ENCODE measurements at regions of chr1 and their contacts with region 1.

Region 1: DNA sequence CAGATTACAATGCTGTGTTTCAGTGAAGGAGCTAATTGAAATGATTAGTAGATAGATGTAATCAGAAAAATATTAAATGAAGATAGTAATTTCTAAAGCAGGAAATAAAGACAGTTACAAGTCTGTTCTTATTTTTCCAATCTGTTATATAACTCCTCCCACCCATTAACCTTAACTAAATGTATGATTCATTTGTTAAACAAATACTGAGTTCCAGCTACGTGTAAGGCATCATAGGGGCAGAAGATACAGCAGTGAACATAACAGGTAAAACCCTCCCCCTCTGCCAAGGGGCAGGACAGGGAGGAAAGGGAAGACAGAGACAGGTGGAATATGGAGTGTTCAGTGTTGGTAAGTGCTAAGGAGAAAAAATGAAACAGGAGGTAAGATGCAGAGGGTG is at the start of gene FAM177B:
- DNase-seq: no peak
- ATAC-seq: no peak
- total RNA-seq, gene FAM177B: not detected

Region 2: GRCh38 chr1:222897527-222898190 is 160.7 kb after region 1 on chr1:
- intact Hi-C with region 1: no loop called
- DNase-seq: no peak
- ATAC-seq: no peak

Region 3: DNA sequence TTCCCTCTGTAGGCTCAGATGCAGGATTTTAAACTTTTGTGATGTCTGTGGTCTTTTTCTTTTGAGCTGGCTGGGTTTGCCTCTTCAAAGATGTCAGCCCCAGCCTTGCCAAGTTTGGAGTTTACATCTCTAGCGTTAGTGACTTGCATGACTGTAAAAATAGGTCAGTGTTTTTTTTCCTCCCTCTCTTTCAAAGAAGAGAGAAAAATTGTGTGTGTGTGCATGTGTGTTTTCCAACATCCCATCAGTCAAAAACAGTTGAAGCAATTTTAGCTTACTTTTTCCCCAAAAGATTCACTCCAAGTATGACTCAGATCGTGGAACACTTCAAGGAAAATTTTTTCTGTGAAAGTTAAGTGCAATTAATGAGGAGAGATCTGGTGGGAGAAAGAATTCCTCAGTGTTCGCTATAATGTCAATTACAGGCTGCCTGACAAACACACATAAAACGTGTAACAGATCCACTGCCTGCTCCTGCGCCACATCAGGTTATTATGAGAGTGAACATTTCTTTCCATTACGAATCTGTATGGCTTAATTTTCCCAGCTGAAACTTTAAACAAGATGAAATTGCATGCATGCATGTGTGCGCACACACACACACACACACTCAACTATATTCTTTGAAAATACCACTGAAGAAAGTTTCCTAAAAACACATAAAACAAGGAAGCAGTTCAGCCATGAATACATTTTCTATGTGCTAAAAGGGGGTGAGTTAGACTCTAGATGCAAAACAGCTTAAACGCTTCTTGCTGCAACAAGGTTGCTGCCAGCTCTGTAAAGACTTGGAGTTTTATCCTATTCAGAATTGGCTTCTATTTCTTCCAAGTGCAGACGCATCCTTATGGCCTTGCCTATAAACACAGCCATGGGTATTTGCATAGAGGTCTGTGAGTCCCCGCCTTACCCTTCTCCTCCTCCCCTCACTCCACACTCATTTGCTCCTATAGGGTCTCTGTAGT is 350.6 kb after region 1 on chr1:
- intact Hi-C with region 1: loop called (anchors 2 to 5 kb)
- DNase-seq: no peak
- ATAC-seq: peak in 1 of 2 donors; percentile 6

Measured in left cardiac atrium (tissue), 4 donors.